A549 (cell line): ENCODE measurements at regions of chr16 and their contacts with region 1.

Region 1: GRCh38 chr16:84277237-84277823 is 17.3 kb upstream of the WFDC1 start:
- DNase-seq: peak; percentile 31 to 59
- ATAC-seq: peak; percentile 78 to 93; a peak in 5 of 6 replicates
- H3K4me3 ChIP-seq: no peak overlapping the region
- H3K27ac ChIP-seq: 0 out of 6 replicates have a peak overlapping the region, but pooled peaks of 1 of the 2 experiments have one; percentile 31
- H3K4me1 ChIP-seq: 0 out of 3 replicates have a peak, but pooled peaks cover 7% of the 10 kb centered on the region
- CTCF ChIP-seq: peak; percentile 94
- EP300 ChIP-seq: no peak
- POLR2A ChIP-seq: no peak
- RAD21 ChIP-seq: peak; percentile 86 to 92

Region 2: DNA sequence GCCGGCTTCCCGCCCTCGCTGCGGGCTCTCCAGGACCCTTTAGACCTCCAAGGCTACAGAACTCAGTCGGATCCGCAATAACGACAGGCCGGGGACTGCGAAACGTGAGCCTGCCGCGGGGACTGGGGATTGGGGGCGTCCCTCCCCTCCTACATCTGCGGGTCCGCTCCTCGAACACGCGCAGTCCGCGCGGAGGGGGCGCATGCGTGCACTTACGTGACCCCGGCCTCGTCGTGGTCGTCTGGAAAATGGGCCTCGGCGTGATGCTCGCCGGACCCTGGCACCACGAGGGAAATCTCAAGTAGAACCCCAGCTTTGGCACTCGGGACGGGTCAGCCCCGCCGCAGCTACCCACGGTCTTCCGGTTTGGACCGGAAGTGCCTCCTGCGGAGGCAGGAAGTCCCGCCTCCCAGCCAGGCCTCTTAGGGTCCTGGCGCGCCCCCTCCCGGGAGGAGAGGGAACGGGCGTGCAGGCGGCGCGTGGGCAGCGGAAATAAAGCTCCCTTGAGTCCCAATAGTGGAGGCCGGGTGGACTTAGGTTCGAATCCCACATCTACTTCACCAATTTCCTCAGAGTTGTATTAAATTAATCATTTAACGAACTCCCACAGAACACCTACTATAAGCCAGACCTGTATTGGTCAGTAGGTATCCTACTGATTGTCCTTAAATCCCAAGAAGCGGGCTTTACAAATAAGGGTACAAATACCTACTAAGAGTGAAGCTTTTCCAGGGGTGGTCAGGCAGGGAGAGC is 90.5 kb before region 1 on chr16 and contains the start of gene TAF1C:
- CTCF ChIA-PET with region 1: interaction called, 17 read pairs
- POLR2A ChIA-PET with region 1: no interaction called
- DNase-seq: peak; percentile 94 to 97
- ATAC-seq: peak; percentile 92 to 95
- H3K4me3 ChIP-seq: peak within 1 kb of the TSS; percentile 84
- H3K27ac ChIP-seq: peak within 1 kb of the TSS; percentile 87 to 94
- H3K4me1 ChIP-seq: peaks cover 6% of the 10 kb centered on the region; the same call in 2 of the 3 replicates
- CTCF ChIP-seq: peak; percentile 91
- EP300 ChIP-seq: no peak
- POLR2A ChIP-seq: peak; percentile 75
- RAD21 ChIP-seq: peak; percentile 59 to 77
- polyA plus RNA-seq, gene TAF1C: 13.2 and 17.8 TPM in 2 replicates

Region 3: DNA sequence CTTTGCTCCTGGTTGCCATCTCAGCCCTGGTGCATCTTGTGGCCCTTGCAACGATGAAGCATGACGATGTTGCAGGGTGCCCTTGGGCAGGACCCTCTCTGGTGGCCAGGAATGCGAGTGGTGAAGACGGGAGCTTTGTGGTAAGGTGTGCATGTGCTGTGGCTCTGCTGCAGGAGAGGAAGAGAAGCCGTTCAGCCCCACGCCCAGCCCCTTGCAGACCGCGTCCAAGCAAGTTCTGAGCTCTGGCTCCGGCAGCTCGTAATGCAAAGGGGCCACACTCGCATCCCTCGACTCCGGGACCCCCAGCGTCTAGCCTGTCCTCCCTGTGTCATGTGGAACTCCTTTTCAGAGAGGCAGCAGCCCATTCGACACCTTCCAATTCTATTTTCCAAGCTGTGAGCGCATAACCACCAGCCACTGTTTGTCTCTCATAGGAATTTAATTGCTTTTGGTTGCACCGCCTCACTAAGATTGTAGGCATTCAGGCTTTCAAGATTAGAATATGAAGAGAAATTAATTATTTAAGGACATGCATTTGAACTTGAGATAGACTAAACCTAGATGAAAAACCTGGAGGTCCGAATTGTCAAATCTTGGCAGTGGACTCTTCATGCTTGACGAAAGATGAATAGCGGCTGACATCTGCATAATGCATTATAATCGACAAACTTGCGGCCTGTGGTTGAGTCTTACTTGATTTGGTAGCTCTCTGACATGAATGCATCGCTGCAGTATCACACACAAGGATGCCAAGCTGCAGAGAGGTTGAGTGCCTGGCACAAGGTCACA is 16.4 kb before region 1 on chr16:
- CTCF ChIA-PET with region 1: interaction called, 78 read pairs
- POLR2A ChIA-PET with region 1: interaction called, 4 read pairs
- DNase-seq: no peak
- ATAC-seq: no peak
- H3K4me3 ChIP-seq: no peak overlapping the region
- H3K27ac ChIP-seq: no peak overlapping the region
- H3K4me1 ChIP-seq: no peaks in the 10 kb centered on the region
- CTCF ChIP-seq: no peak
- EP300 ChIP-seq: no peak
- POLR2A ChIP-seq: no peak
- RAD21 ChIP-seq: no peak

Region 4: GRCh38 chr16:84299734-84300334 is 22.5 kb after region 1 on chr16:
- CTCF ChIA-PET with region 1: interaction called, 14 read pairs
- POLR2A ChIA-PET with region 1: no interaction called
- DNase-seq: no peak
- ATAC-seq: no peak
- H3K4me3 ChIP-seq: no peak overlapping the region
- H3K27ac ChIP-seq: no peak overlapping the region
- H3K4me1 ChIP-seq: no peaks in the 10 kb centered on the region
- CTCF ChIP-seq: no peak
- EP300 ChIP-seq: no peak
- POLR2A ChIP-seq: no peak
- RAD21 ChIP-seq: no peak

Region 5: GRCh38 chr16:84453061-84453752 is 175.9 kb after region 1 on chr16:
- CTCF ChIA-PET with region 1: interaction called, 12 read pairs
- POLR2A ChIA-PET with region 1: no interaction called
- DNase-seq: no peak
- ATAC-seq: no peak
- H3K4me3 ChIP-seq: no peak overlapping the region
- H3K27ac ChIP-seq: no peak overlapping the region
- H3K4me1 ChIP-seq: no peaks in the 10 kb centered on the region
- CTCF ChIP-seq: no peak
- EP300 ChIP-seq: no peak
- POLR2A ChIP-seq: no peak
- RAD21 ChIP-seq: no peak

Region 6: DNA sequence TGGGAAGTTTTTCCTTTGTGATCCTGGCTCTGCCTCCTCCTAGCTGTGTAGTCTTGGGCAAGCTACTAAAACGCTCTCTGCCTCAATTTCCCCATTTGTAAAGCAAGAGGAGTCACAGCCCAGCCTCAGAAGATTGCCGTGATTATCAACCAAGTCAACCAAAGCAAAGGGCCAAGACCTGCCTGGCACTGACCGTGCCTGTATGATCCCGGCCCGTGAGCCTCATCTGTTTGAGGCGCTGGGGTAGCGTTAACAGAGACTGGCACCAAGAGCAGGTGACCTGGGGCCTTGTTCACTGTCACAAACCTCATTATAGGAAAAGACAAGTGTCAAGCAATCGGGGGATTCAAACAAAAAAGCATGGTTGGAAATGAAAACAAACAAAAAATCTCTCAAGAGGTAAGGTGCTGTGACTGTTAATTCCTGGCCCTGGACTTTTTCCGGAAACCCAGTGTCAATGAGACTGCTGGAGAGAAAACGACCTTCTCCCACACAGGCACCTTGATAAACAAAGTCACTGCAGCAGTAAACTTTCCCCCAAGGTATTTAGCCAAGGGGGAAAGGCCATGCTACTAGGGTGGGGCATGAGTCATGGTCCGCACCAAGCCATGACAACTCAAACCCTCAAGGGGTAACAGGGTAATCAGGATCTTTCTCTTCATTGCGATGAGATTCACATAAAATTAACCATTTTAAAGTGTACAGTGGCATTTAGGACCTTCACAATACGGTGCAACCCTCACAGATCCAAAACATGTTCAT is 221.7 kb after region 1 on chr16:
- CTCF ChIA-PET with region 1: interaction called, 43 read pairs
- POLR2A ChIA-PET with region 1: no interaction called
- DNase-seq: no peak
- ATAC-seq: no peak
- H3K4me3 ChIP-seq: no peak overlapping the region
- H3K27ac ChIP-seq: peak overlapping the region in 1 of 2 experiments; percentile 95; a peak in 2 of 6 replicates
- H3K4me1 ChIP-seq: peaks cover 50% of the 10 kb centered on the region
- CTCF ChIP-seq: no peak
- EP300 ChIP-seq: no peak
- POLR2A ChIP-seq: no peak
- RAD21 ChIP-seq: no peak